ENCODE measurements at regions of chrX and their contacts with region 1.

Region 1: DNA sequence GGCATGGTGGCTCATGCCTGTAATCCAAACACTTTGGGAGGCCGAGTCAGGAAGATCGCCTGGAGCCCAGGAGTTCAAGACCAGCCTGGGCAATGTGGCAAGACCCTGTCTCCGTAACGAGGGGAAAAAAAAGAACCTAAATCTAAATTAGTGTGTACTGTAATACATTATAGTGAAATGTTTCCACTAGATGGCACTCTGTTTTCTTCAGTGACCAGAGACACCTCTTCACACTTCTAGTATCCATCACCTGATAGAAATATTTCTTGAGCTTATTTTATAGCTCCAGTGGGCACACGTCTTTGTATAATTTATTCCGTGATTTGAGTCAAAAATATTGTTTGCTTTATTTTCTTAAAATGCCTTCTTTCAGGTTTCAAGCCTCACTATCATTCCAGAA is 600.9 kb upstream of the DIPK2B start:
- DNase-seq: no peak
- ATAC-seq: peak; percentile 89
- H3K4me3 ChIP-seq: no peak overlapping the region
- H3K27ac ChIP-seq: no peak overlapping the region
- H3K4me1 ChIP-seq: peaks cover 3% of the 10 kb centered on the region; the same call in 1 of the 2 replicates
- H3K27me3 ChIP-seq: no peaks in the 10 kb centered on the region
- CTCF ChIP-seq: peak; percentile 11 to 42 (median 38); a peak in 4 of 6 replicates
- EP300 ChIP-seq: no peak
- POLR2A ChIP-seq: no peak
- RAD21 ChIP-seq: peak; percentile 59

Region 2: GRCh38 chrX:45614853-45615252 is 186.7 kb before region 1 on chrX:
- CTCF ChIA-PET with region 1: no interaction called
- POLR2A ChIA-PET with region 1: no interaction called
- RAD21 ChIA-PET with region 1: no interaction called
- SMC1A ChIA-PET with region 1: no interaction called
- in situ Hi-C with region 1: no loop called
- intact Hi-C with region 1: no loop called
- DNase-seq: no peak
- ATAC-seq: peak; percentile 26; the same call in 1 of the 3 replicates
- H3K4me3 ChIP-seq: no peak overlapping the region
- H3K27ac ChIP-seq: no peak overlapping the region
- H3K4me1 ChIP-seq: no peaks in the 10 kb centered on the region
- H3K27me3 ChIP-seq: no peaks in the 10 kb centered on the region
- CTCF ChIP-seq: no peak
- EP300 ChIP-seq: no peak
- POLR2A ChIP-seq: no peak
- RAD21 ChIP-seq: no peak

Region 3: DNA sequence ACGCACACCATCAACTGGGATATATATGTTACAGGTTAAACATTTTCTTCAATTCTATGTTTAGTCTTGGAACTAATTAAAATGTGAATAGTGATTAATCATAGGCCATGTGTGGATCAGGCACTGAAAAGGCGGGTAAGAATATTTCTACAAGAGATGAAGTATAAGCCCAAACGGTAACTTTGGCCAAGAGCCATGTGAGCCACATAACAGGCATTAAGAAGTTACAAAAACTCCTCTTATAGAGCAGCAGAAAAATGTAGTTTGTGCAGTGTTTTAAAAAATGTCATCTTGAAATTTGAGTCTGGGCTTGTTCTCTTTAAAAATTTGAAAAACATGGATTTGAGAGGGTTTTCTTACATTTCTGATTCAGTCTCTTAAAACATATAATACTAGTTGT is 79.1 kb before region 1 on chrX:
- CTCF ChIA-PET with region 1: no interaction called
- POLR2A ChIA-PET with region 1: no interaction called
- RAD21 ChIA-PET with region 1: no interaction called
- SMC1A ChIA-PET with region 1: no interaction called
- in situ Hi-C with region 1: no loop called
- intact Hi-C with region 1: no loop called
- DNase-seq: no peak
- ATAC-seq: no peak
- H3K4me3 ChIP-seq: no peak overlapping the region
- H3K27ac ChIP-seq: no peak overlapping the region
- H3K4me1 ChIP-seq: no peaks in the 10 kb centered on the region
- H3K27me3 ChIP-seq: no peaks in the 10 kb centered on the region; a peak in 1 of 4 replicates
- CTCF ChIP-seq: no peak
- EP300 ChIP-seq: no peak
- POLR2A ChIP-seq: no peak
- RAD21 ChIP-seq: no peak

Region 4: DNA sequence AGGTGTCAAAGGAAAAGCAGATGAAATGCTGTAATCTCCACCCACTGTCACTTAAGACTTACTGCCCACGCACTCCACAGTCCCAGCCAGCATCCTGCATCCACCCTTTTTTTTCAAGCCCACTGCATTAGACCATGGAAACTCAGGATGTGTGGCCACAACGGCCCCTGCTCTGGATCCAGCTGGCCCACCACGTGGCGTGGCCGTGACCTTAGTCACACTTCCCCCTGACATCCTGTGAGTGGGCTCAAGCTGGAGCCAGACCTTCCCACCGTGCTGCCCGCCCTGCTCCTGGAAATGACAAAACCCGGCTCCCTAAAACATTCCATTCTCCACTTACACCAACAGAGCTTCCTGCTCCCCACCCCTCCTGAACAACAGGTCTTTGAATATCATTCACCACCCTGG is 12.6 kb before region 1 on chrX:
- CTCF ChIA-PET with region 1: interaction called, 10 read pairs
- POLR2A ChIA-PET with region 1: no interaction called
- RAD21 ChIA-PET with region 1: no interaction called
- SMC1A ChIA-PET with region 1: interaction called, 4 read pairs
- in situ Hi-C with region 1: no loop called
- intact Hi-C with region 1: no loop called
- DNase-seq: no peak
- ATAC-seq: no peak
- H3K4me3 ChIP-seq: no peak overlapping the region
- H3K27ac ChIP-seq: no peak overlapping the region
- H3K4me1 ChIP-seq: no peaks in the 10 kb centered on the region
- H3K27me3 ChIP-seq: 0 out of 4 replicates have a peak, but pooled peaks cover 0 to 4% of the 10 kb centered on the region in 2 experiments
- CTCF ChIP-seq: no peak
- EP300 ChIP-seq: no peak
- POLR2A ChIP-seq: no peak
- RAD21 ChIP-seq: no peak

Region 5: GRCh38 chrX:45843518-45843917 is 42.0 kb after region 1 on chrX:
- CTCF ChIA-PET with region 1: interaction called, 5 read pairs
- POLR2A ChIA-PET with region 1: no interaction called
- RAD21 ChIA-PET with region 1: interaction called, 3 read pairs
- SMC1A ChIA-PET with region 1: interaction called, 13 read pairs
- in situ Hi-C with region 1: no loop called
- intact Hi-C with region 1: loop called (anchors 5 kb)
- DNase-seq: no peak
- ATAC-seq: peak; percentile 53; the same call in 2 of the 3 replicates
- H3K4me3 ChIP-seq: no peak overlapping the region
- H3K27ac ChIP-seq: no peak overlapping the region
- H3K4me1 ChIP-seq: no peaks in the 10 kb centered on the region
- H3K27me3 ChIP-seq: peaks cover 0 to 2% of the 10 kb centered on the region in 2 experiments; a peak in 1 of 4 replicates
- CTCF ChIP-seq: peak in 2 of 3 experiments; percentile 9 to 34; a peak in 1 of 6 replicates
- EP300 ChIP-seq: no peak
- POLR2A ChIP-seq: no peak
- RAD21 ChIP-seq: peak; percentile 55

Region 6: GRCh38 chrX:46376246-46376885 is 574.8 kb after region 1 on chrX:
- CTCF ChIA-PET with region 1: interaction called, 10 read pairs
- POLR2A ChIA-PET with region 1: no interaction called
- RAD21 ChIA-PET with region 1: interaction called, 9 read pairs
- SMC1A ChIA-PET with region 1: interaction called, 12 read pairs
- in situ Hi-C with region 1: no loop called
- intact Hi-C with region 1: loop called (anchors 1 kb)
- DNase-seq: no peak
- ATAC-seq: peak; percentile 69
- H3K4me3 ChIP-seq: no peak overlapping the region
- H3K27ac ChIP-seq: no peak overlapping the region
- H3K4me1 ChIP-seq: no peaks in the 10 kb centered on the region
- H3K27me3 ChIP-seq: no peaks in the 10 kb centered on the region
- CTCF ChIP-seq: peak in 2 of 3 experiments; percentile 13 to 45; a peak in 2 of 6 replicates
- EP300 ChIP-seq: no peak
- POLR2A ChIP-seq: no peak
- RAD21 ChIP-seq: peak; percentile 42

Region 7: DNA sequence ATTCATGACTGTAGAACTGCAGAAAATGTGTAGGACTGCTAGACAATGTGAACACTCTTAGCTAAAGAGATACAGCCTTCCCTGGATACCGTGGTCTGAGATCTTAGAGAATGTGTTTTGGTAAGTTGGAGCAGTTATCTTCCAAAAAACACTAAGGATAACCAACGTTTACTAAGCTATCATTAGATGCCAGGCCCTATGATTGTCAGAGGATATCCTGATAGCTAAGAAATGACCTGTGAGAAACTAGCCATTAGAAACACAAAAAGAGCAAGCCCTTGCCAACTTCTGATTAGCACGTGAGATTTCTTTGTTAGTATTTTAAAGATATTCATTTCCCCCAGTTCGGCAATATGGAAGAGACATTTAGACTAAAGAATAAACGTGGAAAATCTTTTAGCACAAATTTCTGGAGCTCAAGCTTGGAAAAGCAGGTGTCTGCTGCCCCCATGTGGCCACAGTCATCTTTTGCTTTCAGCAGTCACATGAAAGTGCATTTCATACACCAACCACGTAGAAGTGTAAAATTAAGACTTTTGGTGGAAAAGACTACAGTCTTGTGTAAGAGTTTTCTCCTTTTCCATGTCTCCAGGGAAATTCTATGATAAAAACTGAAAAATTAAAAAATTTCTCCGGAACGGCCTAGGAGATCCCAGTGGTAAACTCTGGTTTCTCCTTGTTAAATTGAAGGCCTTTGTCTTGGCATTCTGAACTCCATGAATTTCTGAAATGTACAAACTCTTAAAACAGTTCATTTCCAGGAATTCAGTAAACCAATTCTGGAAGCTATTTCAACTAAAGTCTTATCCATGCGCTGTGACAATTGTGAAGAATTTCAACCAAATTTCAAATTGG is 607.2 kb after region 1 on chrX:
- CTCF ChIA-PET with region 1: interaction called, 27 read pairs
- POLR2A ChIA-PET with region 1: no interaction called
- RAD21 ChIA-PET with region 1: interaction called, 9 read pairs
- SMC1A ChIA-PET with region 1: interaction called, 16 read pairs
- in situ Hi-C with region 1: no loop called
- intact Hi-C with region 1: loop called (anchors 5 kb)
- DNase-seq: peak; percentile 16
- ATAC-seq: peak; percentile 74
- H3K4me3 ChIP-seq: no peak overlapping the region
- H3K27ac ChIP-seq: no peak overlapping the region
- H3K4me1 ChIP-seq: no peaks in the 10 kb centered on the region
- H3K27me3 ChIP-seq: no peaks in the 10 kb centered on the region; a peak in 1 of 4 replicates
- CTCF ChIP-seq: peak; percentile 85 to 86 (median 85)
- EP300 ChIP-seq: no peak
- POLR2A ChIP-seq: no peak
- RAD21 ChIP-seq: peak; percentile 86